OCI-LY7 (cell line): ENCODE measurements at regions of chr14 and their contacts with region 1.

Region 1: DNA sequence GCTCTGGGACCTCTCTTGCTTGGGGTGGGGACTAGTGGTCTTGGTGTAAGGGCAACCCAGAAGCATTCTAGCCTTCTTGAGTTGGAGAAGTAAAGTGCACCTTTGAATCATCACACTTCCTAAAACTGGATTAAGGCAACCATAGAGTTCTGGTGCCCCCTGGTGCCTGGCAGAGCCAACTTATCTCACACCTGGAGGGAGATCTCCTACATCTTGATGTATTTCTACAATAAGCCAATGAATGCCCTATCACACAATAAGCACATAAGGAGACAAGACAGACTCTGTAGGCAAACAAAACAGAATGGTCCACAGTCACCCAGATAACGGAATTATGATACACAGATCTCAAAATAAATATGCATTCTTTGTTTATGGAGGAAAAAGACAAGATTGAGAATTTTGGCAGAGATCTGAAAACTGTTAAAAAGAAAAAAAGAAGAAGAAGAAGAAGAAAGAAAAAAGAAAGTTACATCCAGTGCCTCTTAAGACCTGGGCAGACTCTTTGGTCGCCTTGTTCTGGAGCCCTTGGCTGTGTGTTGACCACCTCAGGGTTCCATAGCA is 95.9 kb upstream of the PPP2R5C start:
- DNase-seq: peak; percentile 69
- H3K4me3 ChIP-seq: no peak overlapping the region
- H3K27ac ChIP-seq: no peak overlapping the region
- H3K4me1 ChIP-seq: no peaks in the 10 kb centered on the region
- CTCF ChIP-seq: peak; percentile 88

Region 2: DNA sequence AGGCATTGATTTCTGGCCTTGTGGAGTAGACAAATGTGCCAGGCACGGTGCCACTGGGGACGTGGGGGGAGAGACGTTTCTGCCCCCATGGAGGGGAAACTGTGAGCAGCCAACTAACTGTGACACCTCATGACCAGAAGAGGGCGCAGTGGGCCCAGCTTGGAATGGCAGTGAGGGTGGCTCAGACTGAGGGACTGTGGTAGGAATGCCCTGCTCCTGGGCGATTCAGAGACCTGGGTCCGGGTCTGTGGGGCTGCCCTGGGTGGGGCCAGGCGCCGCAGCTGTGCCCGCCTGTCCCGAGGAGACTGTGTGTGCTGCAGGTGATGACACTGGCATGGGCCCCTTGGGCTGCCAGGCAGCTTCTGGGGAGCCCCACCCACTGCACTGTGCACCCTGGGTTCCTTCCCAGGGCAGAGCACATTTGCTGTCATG is 1281.9 kb before region 1 on chr14:
- CTCF ChIA-PET with region 1: no interaction called
- POLR2A ChIA-PET with region 1: no interaction called
- intact Hi-C with region 1: loop called (anchors 5 kb)
- DNase-seq: peak; percentile 65
- H3K4me3 ChIP-seq: no peak overlapping the region
- H3K27ac ChIP-seq: no peak overlapping the region
- H3K4me1 ChIP-seq: no peaks in the 10 kb centered on the region
- CTCF ChIP-seq: peak; percentile 91

Region 3: GRCh38 chr14:100850841-100851585 is 814.6 kb before region 1 on chr14:
- CTCF ChIA-PET with region 1: no interaction called
- POLR2A ChIA-PET with region 1: no interaction called
- intact Hi-C with region 1: loop called (anchors 1 kb)
- DNase-seq: peak; percentile 67
- H3K4me3 ChIP-seq: no peak overlapping the region
- H3K27ac ChIP-seq: no peak overlapping the region
- H3K4me1 ChIP-seq: no peaks in the 10 kb centered on the region
- CTCF ChIP-seq: peak; percentile 90